Ascending aorta (tissue), 2 donors: ENCODE measurements at regions of chr11 and their contacts with region 1.

Region 1: GRCh38 chr11:121983906-121984305 is 132.1 kb downstream of the BLID start:
- DNase-seq: no peak
- H3K4me3 ChIP-seq: no peak overlapping the region
- H3K27ac ChIP-seq: no peak overlapping the region
- H3K4me1 ChIP-seq: no peaks in the 10 kb centered on the region
- H3K27me3 ChIP-seq: no peaks in the 10 kb centered on the region
- CTCF ChIP-seq: no peak

Region 2: GRCh38 chr11:121194731-121195596 is 788.9 kb before region 1 on chr11:
- intact Hi-C with region 1: no loop called
- DNase-seq: no peak
- H3K4me3 ChIP-seq: no peak overlapping the region
- H3K27ac ChIP-seq: no peak overlapping the region
- H3K4me1 ChIP-seq: no peaks in the 10 kb centered on the region
- H3K27me3 ChIP-seq: no peaks in the 10 kb centered on the region
- CTCF ChIP-seq: peak; percentile 32 to 81 (median 76)

Region 3: GRCh38 chr11:121829159-121829643 is 154.7 kb before region 1 on chr11:
- intact Hi-C with region 1: no loop called
- DNase-seq: peak; percentile 12 to 75
- H3K4me3 ChIP-seq: no peak overlapping the region
- H3K27ac ChIP-seq: no peak overlapping the region
- H3K4me1 ChIP-seq: no peaks in the 10 kb centered on the region
- H3K27me3 ChIP-seq: no peaks in the 10 kb centered on the region
- CTCF ChIP-seq: no peak

Region 4: GRCh38 chr11:121870206-121871045 is 113.5 kb before region 1 on chr11:
- intact Hi-C with region 1: no loop called
- DNase-seq: no peak
- H3K4me3 ChIP-seq: no peak overlapping the region
- H3K27ac ChIP-seq: peak overlapping the region; percentile 58 to 60
- H3K4me1 ChIP-seq: peaks cover 0 to 15% of the 10 kb centered on the region in 2 donors
- H3K27me3 ChIP-seq: no peaks in the 10 kb centered on the region
- CTCF ChIP-seq: no peak

Region 5: GRCh38 chr11:121914508-121915059 is 69.3 kb before region 1 on chr11:
- intact Hi-C with region 1: loop called (anchors 10 kb)
- DNase-seq: no peak
- H3K4me3 ChIP-seq: no peak overlapping the region
- H3K27ac ChIP-seq: no peak overlapping the region
- H3K4me1 ChIP-seq: no peaks in the 10 kb centered on the region
- H3K27me3 ChIP-seq: no peaks in the 10 kb centered on the region
- CTCF ChIP-seq: no peak

Region 6: GRCh38 chr11:122108192-122108799 is 124.4 kb after region 1 on chr11:
- intact Hi-C with region 1: no loop called
- DNase-seq: no peak
- H3K4me3 ChIP-seq: no peak overlapping the region
- H3K27ac ChIP-seq: peak overlapping the region; percentile 56 to 69
- H3K4me1 ChIP-seq: peaks cover 3 to 32% of the 10 kb centered on the region in 2 donors
- H3K27me3 ChIP-seq: no peaks in the 10 kb centered on the region
- CTCF ChIP-seq: peak in 1 of 3 experiments; percentile 25